Colonic mucosa (tissue), 4 donors: ENCODE measurements at regions of chr4 and their contacts with region 1.

Region 1: DNA sequence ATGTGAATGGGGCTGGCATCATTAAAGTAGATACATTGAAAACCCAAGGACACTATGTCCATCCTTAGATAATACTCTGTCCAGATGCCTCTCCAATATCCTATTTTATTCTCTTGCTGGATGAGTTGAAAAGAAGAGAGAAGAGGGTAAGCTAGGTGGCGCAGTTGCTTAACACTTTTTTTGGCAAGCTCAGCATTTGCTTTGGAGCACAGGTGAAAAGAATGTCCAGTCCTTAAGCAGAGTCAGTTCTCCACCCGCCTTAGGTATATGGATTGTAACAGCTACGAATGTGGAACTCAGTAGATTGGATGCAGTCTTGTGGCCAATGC is 208.4 kb downstream of the NWD2 start:
- DNase-seq: peak; percentile 85
- H3K4me3 ChIP-seq: peak overlapping the region; percentile 57
- H3K27ac ChIP-seq: peak overlapping the region; percentile 73
- H3K4me1 ChIP-seq: no peaks in the 10 kb centered on the region
- H3K27me3 ChIP-seq: peaks cover 7% of the 10 kb centered on the region
- CTCF ChIP-seq: peak; percentile 31

Region 2: DNA sequence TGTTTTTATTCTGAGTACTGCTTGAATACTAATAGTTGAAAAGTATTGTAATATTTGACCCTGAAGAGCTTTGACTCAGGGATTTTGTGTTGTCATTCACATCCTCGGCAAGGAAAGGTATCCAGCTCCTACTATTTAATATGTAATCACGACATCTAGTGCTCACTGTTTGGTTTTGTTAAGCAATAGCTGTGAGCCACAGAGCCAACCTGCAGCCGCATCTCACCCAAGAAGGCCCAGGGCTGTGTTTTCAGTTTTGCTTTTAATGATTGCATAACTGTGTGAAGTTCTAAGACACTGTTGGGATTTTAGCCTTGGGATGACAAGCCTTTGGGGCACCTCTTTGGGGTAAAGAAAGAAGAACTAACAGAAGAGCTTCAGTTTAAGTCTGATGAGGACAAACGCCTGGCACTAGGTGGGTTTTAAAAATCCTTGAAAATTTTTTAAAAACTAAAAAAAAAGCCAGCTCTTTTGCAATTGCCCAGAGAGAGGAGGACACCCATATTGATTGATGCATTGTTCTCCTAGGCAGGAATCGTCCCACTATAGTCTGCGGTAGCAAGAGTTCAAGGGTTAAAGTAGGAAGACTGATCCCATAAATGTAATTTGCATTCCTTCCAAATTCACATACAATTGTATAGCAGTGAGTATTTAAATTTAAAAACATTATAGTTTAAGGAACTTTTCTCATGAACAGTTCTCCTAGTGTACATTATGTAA is 75.4 kb after region 1 on chr4:
- intact Hi-C with region 1: loop called (anchors 10 kb)
- DNase-seq: no peak
- H3K4me3 ChIP-seq: no peak overlapping the region
- H3K27ac ChIP-seq: no peak overlapping the region
- H3K4me1 ChIP-seq: no peaks in the 10 kb centered on the region
- H3K27me3 ChIP-seq: no peaks in the 10 kb centered on the region
- CTCF ChIP-seq: no peak

Region 3: DNA sequence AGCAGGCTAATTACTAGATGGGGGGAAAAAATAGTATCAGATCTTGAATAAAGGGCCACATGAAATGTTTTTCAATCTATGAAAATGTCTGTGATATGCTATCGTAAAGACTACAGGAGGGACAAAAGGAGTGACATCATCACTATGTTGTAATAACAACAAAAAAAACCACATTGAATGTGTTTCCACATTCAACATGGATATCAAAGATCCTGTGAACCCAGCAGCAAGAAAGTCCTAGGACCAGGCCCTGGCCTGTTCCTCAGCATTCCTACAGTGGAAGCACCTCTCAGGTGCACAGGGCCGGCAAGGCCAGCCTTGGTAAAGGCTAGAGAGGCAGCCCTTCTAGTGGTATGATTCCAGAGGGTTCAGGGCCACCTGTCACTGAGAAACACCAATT is 114.9 kb after region 1 on chr4:
- intact Hi-C with region 1: loop called (anchors 5 kb)
- DNase-seq: no peak
- H3K4me3 ChIP-seq: no peak overlapping the region
- H3K27ac ChIP-seq: no peak overlapping the region
- H3K4me1 ChIP-seq: no peaks in the 10 kb centered on the region
- H3K27me3 ChIP-seq: no peaks in the 10 kb centered on the region
- CTCF ChIP-seq: no peak

Region 4: GRCh38 chr4:37812710-37813109 is 359.8 kb after region 1 on chr4:
- intact Hi-C with region 1: no loop called
- DNase-seq: no peak
- H3K4me3 ChIP-seq: no peak overlapping the region
- H3K27ac ChIP-seq: no peak overlapping the region
- H3K4me1 ChIP-seq: no peaks in the 10 kb centered on the region
- H3K27me3 ChIP-seq: no peaks in the 10 kb centered on the region
- CTCF ChIP-seq: no peak